Activated T-helper 1 cell treated with anti-CD3 and anti-CD28 coated beads, Interleukin-12 subunit alpha, Interleukin-12 subunit beta, Interleukin-2, Interleukin-4 antibody, amounts not matched to agents 30 ng/mL and 10 ng/mL and 1 ng/mL, durations not matched to agents 14 hours and 24 hours and 36 hours (primary cell): ENCODE measurements at regions of chr2 and their contacts with region 1.

Region 1: GRCh38 chr2:131105156-131105949 is at the start of gene PLEKHB2:
- DNase-seq: peak; percentile 96
- H3K4me3 Mint-ChIP-seq: peak within 1 kb of the TSS; percentile 97
- H3K27ac Mint-ChIP-seq: peak within 1 kb of the TSS; percentile 100
- H3K4me1 Mint-ChIP-seq: peaks cover 35% of the 10 kb centered on the region
- H3K27me3 Mint-ChIP-seq: no peaks in the 10 kb centered on the region
- total RNA-seq, gene PLEKHB2: 72.5 and 73.9 TPM in 2 replicates

Region 2: GRCh38 chr2:130342533-130343275 is 762.6 kb before region 1 on chr2 and contains the start of gene IMP4:
- intact Hi-C with region 1: loop called (anchors 2 kb)
- DNase-seq: peak; percentile 95
- H3K4me3 Mint-ChIP-seq: peak within 1 kb of the TSS; percentile 100
- H3K27ac Mint-ChIP-seq: peak within 1 kb of the TSS; percentile 97
- H3K4me1 Mint-ChIP-seq: peaks cover 21% of the 10 kb centered on the region
- H3K27me3 Mint-ChIP-seq: no peaks in the 10 kb centered on the region
- total RNA-seq, gene IMP4: 169 and 184 TPM in 2 replicates

Region 3: GRCh38 chr2:130727286-130728018 is 377.9 kb before region 1 on chr2:
- intact Hi-C with region 1: loop called (anchors 1 kb)
- DNase-seq: peak; percentile 84
- H3K4me3 Mint-ChIP-seq: peak overlapping the region; percentile 76
- H3K27ac Mint-ChIP-seq: peak overlapping the region; percentile 57
- H3K4me1 Mint-ChIP-seq: peaks cover 12% of the 10 kb centered on the region
- H3K27me3 Mint-ChIP-seq: peaks cover 12% of the 10 kb centered on the region

Region 4: DNA sequence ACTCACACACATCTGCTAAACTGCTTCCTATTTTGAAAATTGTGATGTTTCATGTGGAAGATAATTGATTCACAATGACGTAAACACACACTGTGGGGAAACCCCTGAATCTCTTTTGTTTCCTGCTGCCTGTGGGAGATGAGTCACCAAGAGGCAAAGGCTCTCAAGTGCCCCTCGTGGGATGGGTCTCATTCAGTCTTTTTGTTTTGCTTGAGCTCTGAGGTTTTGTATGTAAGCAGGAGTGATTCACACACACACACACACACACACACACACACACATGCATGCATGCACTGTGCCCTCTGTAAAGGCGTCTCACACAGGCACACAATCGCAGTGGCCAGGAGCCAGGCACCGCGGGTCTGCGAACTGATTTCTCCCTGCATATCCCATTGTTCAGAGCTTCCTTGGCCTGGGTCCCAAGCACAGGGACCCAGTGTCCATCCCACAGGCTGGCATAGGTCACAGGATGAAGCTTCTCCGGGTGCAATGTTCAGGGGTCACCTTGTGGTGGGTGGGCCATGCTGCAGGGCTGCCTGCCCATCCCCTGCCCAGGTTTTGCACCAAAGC is 280.8 kb before region 1 on chr2:
- intact Hi-C with region 1: loop called (anchors 5 kb)
- DNase-seq: peak; percentile 72
- H3K4me3 Mint-ChIP-seq: peak overlapping the region; percentile 63
- H3K27ac Mint-ChIP-seq: peak overlapping the region; percentile 89
- H3K4me1 Mint-ChIP-seq: peaks cover 15% of the 10 kb centered on the region
- H3K27me3 Mint-ChIP-seq: peaks cover 20% of the 10 kb centered on the region

Region 5: DNA sequence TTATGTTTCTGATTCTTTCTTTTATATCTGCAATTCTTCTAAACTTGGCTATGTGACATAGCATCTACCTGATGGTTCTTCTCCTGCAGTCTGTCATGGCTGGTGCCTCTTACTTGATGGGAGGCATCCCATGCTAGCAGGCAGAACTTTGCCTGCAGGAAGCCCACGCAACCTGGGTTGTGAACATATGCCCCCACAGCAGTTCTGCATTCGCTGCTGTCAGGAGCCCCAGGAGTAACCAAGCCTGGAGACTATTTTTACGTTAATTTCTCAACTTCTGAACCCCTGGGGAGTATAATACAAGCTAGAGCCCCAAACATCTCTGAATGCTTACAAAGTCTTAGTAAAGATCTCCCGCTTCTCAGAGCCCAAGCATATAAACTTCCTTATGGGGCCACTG is 24.2 kb before region 1 on chr2:
- intact Hi-C with region 1: no loop called
- DNase-seq: no peak
- H3K4me3 Mint-ChIP-seq: no peak overlapping the region
- H3K27ac Mint-ChIP-seq: peak overlapping the region; percentile 64
- H3K4me1 Mint-ChIP-seq: peaks cover 15% of the 10 kb centered on the region
- H3K27me3 Mint-ChIP-seq: no peaks in the 10 kb centered on the region

Region 6: DNA sequence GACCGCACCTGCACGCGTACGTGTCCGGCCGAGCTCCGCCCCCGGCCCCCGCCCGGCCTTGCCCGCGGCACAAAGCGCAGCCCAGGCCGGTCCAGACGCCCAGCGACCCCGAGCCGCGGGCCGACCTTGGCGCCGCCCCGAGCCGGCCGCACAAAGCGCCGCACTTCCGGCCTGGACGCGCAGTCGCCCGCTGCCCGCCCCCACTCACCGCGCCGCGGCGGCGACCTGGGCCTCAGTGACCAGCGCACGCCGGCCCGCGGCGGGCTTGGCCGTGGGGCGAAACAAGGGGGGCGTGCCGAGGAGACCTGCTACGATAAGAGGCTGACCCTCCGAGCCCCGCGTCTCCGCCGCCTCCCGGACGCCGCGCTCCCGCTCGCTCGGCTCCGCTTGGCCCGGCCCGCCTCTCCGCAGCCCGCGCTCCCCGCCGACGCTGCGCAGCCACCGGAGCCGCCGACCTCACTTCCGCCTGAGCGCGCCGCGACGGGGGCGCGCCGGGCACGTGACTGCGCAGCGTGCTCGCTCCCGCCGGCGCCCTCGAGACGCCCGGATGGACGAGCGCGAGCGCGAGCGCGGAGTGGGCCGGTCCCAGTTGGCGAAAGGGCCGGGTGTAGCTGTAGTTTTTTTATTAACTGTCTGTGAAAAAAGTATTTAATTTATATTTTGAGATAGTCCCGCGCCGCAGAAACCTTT is 12.2 kb before region 1 on chr2 and contains the start of gene FAM168B:
- intact Hi-C with region 1: loop called (anchors 1 kb)
- DNase-seq: peak; percentile 89
- H3K4me3 Mint-ChIP-seq: peak within 1 kb of the TSS; percentile 93
- H3K27ac Mint-ChIP-seq: peak within 1 kb of the TSS; percentile 95
- H3K4me1 Mint-ChIP-seq: peaks cover 18% of the 10 kb centered on the region
- H3K27me3 Mint-ChIP-seq: no peaks in the 10 kb centered on the region
- total RNA-seq, gene FAM168B: 79.0 and 79.1 TPM in 2 replicates

Region 7: DNA sequence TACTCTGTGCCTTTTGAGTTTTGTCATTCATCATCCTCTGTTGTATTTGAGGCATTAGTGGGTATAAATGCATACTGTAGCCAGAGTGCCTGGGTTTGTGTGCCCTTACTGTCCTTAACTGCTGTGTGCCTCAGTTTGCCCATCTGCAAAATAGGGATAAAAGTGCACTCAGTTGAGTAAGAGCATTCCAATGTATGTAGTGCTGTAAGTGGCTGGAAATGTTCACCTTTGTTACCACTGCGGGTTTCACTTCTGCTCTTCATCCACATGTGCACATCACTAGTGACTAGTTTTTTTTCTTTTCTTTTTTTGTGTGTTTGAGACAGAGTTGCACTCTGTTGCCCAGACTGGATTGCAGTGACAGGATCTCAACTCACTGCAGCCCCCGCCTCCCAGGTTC is 39.7 kb after region 1 on chr2:
- intact Hi-C with region 1: no loop called
- DNase-seq: no peak
- H3K4me3 Mint-ChIP-seq: no peak overlapping the region
- H3K27ac Mint-ChIP-seq: peak overlapping the region; percentile 63
- H3K4me1 Mint-ChIP-seq: peaks cover 5% of the 10 kb centered on the region
- H3K27me3 Mint-ChIP-seq: no peaks in the 10 kb centered on the region

Region 8: DNA sequence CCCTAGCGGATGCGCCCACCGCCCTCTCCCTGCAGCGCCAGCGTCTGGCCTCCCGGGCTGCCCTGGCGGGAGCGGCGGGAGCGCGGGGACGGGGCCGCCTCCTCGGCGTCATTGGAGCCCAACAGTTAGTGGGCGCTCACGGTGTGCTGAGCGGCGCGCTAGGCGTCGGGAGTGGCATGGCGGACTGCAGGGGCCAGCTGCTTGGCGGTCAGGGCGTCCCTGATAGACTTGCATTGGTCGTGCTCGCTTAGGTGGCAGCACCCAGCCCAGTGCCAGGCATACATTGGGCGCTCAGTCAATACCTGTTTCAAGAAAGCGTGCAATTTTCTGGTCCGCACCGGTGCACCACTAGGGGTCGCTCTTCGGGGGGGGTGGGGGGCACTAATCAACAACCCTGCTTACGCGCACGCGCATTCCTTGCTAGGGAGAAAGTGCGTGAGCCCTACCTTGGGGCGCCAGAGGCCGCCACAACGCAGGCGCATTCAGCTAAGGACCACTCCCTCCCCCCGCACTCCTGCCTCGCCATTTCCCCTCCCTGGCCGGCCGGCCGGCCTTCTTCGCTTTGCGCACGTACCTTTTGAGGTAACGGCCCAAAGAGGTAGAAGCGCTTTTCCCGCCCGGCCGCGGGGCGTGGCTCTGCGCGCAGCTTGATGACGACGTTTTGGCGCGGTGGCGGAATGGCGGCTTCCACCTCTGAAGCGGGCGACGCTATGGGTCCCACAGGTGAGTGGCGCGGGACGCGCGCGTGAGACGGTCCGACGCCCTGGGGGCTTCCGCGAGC is 387.3 kb after region 1 on chr2:
- intact Hi-C with region 1: loop called (anchors 2 kb)
- DNase-seq: peak; percentile 89
- H3K4me3 Mint-ChIP-seq: peak overlapping the region; percentile 98
- H3K27ac Mint-ChIP-seq: peak overlapping the region; percentile 97
- H3K4me1 Mint-ChIP-seq: peaks cover 18% of the 10 kb centered on the region
- H3K27me3 Mint-ChIP-seq: no peaks in the 10 kb centered on the region

Region 9: GRCh38 chr2:131801210-131801744 is 695.9 kb after region 1 on chr2:
- intact Hi-C with region 1: loop called (anchors 5 kb)
- DNase-seq: no peak
- H3K4me3 Mint-ChIP-seq: no peak overlapping the region
- H3K27ac Mint-ChIP-seq: no peak overlapping the region
- H3K4me1 Mint-ChIP-seq: no peaks in the 10 kb centered on the region
- H3K27me3 Mint-ChIP-seq: peaks cover 7% of the 10 kb centered on the region